SK-MEL-5 (cell line): ENCODE measurements at regions of chr1 and their contacts with region 1.

Region 1: GRCh38 chr1:24199289-24199900 is 12.3 kb upstream of the IFNLR1 start:
- DNase-seq: peak; percentile 68

Region 2: DNA sequence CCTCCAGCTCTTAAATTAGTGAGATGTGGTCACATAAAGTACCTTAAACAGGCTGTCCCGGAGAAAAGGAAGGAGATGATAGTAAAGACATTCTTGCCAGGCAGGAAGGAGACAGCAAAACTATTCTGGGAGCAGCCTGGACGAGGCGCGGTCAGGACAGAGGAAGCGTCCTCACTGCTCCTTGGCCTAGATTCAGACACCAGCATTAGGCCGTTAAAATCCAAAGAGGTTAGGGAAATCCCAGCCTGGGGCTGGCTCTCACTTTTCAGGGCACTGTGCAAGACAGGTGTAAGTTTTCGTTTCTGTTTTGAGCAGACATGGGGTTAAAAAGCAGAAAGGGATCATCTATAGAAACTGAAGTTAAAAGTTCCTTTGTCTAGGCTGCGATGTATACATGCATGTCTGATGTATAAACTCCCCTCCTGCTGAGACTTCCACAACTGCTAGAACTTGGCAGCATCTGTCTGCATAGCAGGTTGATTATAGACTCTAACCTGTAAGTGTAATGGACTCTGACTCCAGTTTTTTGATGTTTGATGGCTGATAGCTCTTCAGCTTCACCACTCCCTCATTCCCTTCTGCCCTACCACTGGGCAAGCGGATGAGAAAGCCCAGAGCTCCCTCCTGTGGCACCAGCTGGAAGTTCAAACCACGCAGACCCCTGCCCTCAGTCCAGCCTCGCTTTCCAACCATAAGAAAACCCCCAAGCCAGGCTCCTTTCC is 192.6 kb after region 1 on chr1:
- in situ Hi-C with region 1: loop called (anchors 10 kb)
- DNase-seq: peak; percentile 77